ENCODE measurements at regions of chr10 and their contacts with region 1.

Region 1: DNA sequence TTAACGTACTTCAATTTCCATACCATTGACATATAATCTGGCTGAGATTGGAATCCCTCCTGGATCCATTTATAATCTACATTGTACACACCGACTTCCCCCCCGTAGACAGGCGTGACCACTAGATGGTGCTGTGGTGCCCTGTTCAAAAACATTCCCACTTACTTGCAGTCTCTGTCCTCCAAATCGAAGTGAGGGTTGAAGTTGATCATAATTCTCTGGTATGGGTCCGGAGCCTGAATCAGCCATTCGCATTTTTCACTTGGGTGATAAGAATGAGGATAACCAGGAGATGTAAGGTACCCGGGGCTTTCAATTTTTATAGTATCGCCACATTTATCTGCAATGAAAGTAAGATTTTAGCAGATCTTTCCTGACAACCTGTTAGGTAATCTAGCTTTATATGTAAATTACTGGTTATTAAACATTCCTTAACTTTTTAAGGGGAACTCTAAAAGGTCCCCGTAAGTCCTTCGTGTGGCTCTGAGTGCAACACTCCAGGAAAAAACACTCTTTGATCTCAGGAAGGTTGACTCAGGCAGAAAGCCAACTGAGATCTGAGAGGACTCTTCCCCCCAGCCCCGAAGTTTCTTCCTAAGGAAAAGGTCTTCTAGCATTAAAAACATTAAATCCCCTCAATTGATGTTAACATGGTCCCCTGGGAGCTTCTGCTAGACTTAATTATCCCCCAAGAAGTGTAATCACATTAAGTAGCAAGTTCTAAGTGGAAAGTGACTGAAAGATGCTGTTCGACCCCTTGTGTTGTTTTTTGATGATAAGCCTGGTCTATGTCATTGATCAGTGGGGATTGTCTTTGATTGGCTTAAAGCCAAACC is 3.7 kb downstream of the NRP1 start:
- DNase-seq: peak; percentile 87 to 89 (median 87)
- ATAC-seq: peak; percentile 9 to 35 (median 25)
- H3K4me3 ChIP-seq: peak overlapping the region; percentile 53 to 92 (median 88)
- H3K27ac ChIP-seq: peak overlapping the region in 11 of 12 donors; percentile 95 to 100 (median 98)
- H3K4me1 ChIP-seq: peaks cover 3 to 53% (median 40%) of the 10 kb centered on the region in 12 donors
- H3K27me3 ChIP-seq: no peaks in the 10 kb centered on the region
- CTCF ChIP-seq: peak; percentile 87 to 96 (median 91)
- POLR2A ChIP-seq: no peak

Region 2: GRCh38 chr10:32948451-32948850 is 382.3 kb before region 1 on chr10:
- intact Hi-C with region 1: no loop called
- DNase-seq: no peak
- ATAC-seq: no peak
- H3K4me3 ChIP-seq: no peak overlapping the region
- H3K27ac ChIP-seq: peak overlapping the region in 1 of 12 donors; percentile 27
- H3K4me1 ChIP-seq: peaks cover 4 to 92% (median 74%) of the 10 kb centered on the region in 12 donors
- H3K27me3 ChIP-seq: no peaks in the 10 kb centered on the region
- CTCF ChIP-seq: no peak
- POLR2A ChIP-seq: no peak

Region 3: DNA sequence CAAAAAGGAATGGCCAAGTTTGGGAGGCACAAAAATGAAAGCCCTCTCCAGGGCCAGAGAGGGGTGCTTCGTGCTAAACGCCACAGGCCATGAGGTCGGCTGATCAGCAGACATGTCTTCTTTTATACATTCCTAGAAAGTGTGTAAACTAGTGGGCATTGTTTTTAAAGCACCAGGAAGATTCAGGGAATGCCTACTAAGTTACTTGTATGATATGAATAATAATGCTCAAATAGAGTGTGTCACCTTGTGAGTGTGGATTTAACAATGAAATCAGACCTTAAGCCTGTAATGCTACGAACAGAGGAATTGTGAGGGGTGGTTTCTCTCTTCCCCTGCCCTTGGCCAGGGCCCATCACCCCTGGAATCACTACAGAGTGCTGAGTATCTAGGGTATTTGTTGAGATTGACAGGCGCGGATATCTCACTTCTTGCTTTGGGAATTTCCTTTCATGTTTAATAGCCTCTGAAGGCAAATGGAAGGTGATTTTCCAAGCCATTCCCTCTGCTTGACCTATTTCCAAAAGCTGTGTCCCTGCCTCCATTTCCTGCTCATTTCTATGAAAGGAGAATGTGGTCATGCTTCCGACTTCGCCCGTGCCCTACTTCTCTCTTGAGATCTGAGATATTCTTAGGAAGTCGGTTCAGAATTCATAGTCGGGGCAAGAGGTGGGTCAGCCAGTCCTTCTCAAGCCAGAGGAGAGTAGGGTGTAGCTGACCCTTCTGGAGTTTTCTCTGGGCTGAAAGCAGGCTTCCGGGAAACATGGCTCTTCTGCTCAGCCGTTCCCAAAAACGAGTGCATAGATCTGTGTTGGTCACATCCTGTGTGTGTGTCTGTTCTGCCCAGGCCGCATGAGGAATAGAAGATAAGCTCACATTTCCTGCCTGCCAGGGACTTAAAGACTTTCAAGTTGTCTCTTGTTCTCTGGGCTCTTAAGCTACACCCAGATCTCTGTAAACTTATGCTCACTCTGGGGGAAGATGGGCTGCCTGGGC is 204.9 kb before region 1 on chr10:
- intact Hi-C with region 1: loop called in 1 of 10 experiments (anchors 5 kb)
- DNase-seq: peak in 3 of 5 donors; percentile 26 to 54 (median 28)
- ATAC-seq: peak; percentile 24 to 56 (median 42)
- H3K4me3 ChIP-seq: no peak overlapping the region
- H3K27ac ChIP-seq: peak overlapping the region in 11 of 12 donors; percentile 21 to 85 (median 55)
- H3K4me1 ChIP-seq: peaks cover 0 to 52% (median 22%) of the 10 kb centered on the region in 12 donors
- H3K27me3 ChIP-seq: no peaks in the 10 kb centered on the region
- CTCF ChIP-seq: no peak
- POLR2A ChIP-seq: no peak

Region 4: GRCh38 chr10:33434933-33435332 is 104.2 kb after region 1 on chr10:
- intact Hi-C with region 1: no loop called
- DNase-seq: no peak
- ATAC-seq: no peak
- H3K4me3 ChIP-seq: no peak overlapping the region
- H3K27ac ChIP-seq: peak overlapping the region in 1 of 12 donors; percentile 23
- H3K4me1 ChIP-seq: peaks cover 0 to 3% (median 0%) of the 10 kb centered on the region in 12 donors
- H3K27me3 ChIP-seq: no peaks in the 10 kb centered on the region
- CTCF ChIP-seq: no peak
- POLR2A ChIP-seq: no peak

Region 5: GRCh38 chr10:33553748-33554571 is 223.2 kb after region 1 on chr10:
- intact Hi-C with region 1: loop called in 1 of 10 experiments (anchors 5 kb)
- DNase-seq: no peak
- ATAC-seq: no peak
- H3K4me3 ChIP-seq: no peak overlapping the region
- H3K27ac ChIP-seq: no peak overlapping the region
- H3K4me1 ChIP-seq: peaks cover 0 to 7% (median 2%) of the 10 kb centered on the region in 12 donors
- H3K27me3 ChIP-seq: no peaks in the 10 kb centered on the region
- CTCF ChIP-seq: no peak
- POLR2A ChIP-seq: no peak

Region 6: GRCh38 chr10:33631929-33632328 is 301.2 kb after region 1 on chr10:
- intact Hi-C with region 1: no loop called
- DNase-seq: no peak
- ATAC-seq: no peak
- H3K4me3 ChIP-seq: no peak overlapping the region
- H3K27ac ChIP-seq: no peak overlapping the region
- H3K4me1 ChIP-seq: peaks cover 0 to 8% (median 0%) of the 10 kb centered on the region in 12 donors
- H3K27me3 ChIP-seq: no peaks in the 10 kb centered on the region
- CTCF ChIP-seq: no peak
- POLR2A ChIP-seq: no peak

Region 7: DNA sequence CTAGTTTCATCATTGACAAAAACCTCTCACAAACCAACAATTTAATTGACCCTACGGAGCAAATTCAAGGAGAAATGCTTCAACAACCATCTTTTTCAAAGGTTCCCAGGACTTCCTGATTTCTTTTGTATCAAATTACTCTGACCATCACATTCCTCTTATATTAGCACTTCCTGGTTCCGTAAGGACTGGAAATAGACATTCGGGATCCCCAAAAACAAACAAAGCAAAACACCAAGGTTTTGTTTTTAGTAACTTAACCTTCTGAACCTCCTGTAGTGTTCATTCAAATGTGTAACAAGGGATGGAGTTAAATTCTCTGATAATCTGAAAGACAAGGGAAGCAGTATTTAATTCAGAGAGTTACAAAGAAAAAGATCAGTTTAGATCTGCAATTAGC is 391.3 kb after region 1 on chr10:
- intact Hi-C with region 1: loop called in 4 of 10 experiments (anchors 5 to 10 kb)
- DNase-seq: no peak
- ATAC-seq: no peak
- H3K4me3 ChIP-seq: no peak overlapping the region
- H3K27ac ChIP-seq: peak overlapping the region in 5 of 12 donors; percentile 12 to 42 (median 38)
- H3K4me1 ChIP-seq: peaks cover 11 to 45% (median 32%) of the 10 kb centered on the region in 12 donors
- H3K27me3 ChIP-seq: no peaks in the 10 kb centered on the region
- CTCF ChIP-seq: no peak
- POLR2A ChIP-seq: no peak

Region 8: GRCh38 chr10:33887188-33887587 is 556.4 kb after region 1 on chr10:
- intact Hi-C with region 1: loop called in 2 of 10 experiments (anchors 2 to 10 kb)
- DNase-seq: peak in 2 of 5 donors; percentile 35 to 38
- ATAC-seq: peak; percentile 51 to 77 (median 74)
- H3K4me3 ChIP-seq: no peak overlapping the region
- H3K27ac ChIP-seq: no peak overlapping the region
- H3K4me1 ChIP-seq: no peaks in the 10 kb centered on the region
- H3K27me3 ChIP-seq: no peaks in the 10 kb centered on the region
- CTCF ChIP-seq: no peak
- POLR2A ChIP-seq: no peak

Region 9: DNA sequence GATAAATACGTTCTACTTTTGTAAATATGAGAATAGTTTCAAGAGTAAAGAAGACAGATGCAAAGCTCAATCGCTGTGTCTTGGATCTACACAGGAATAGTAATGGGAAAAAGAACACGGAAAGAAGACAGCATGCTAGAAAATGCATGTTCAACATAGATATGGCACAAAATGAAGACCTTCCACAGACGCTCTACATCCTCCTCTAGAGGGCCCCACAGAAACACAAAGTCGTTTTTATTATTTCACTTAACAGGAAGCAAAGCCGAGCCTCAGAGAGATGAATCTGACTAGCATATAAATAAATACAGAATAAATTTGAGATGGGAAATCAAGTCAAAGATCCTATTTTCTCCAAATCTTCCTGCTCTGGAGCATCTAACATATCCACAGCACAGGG is 1191.8 kb after region 1 on chr10:
- intact Hi-C with region 1: loop called in 1 of 10 experiments (anchors 10 kb)
- DNase-seq: no peak
- ATAC-seq: no peak
- H3K4me3 ChIP-seq: peak overlapping the region in 5 of 12 donors; percentile 10 to 26 (median 22)
- H3K27ac ChIP-seq: no peak overlapping the region
- H3K4me1 ChIP-seq: peaks cover 0 to 15% (median 6%) of the 10 kb centered on the region in 12 donors
- H3K27me3 ChIP-seq: no peaks in the 10 kb centered on the region
- CTCF ChIP-seq: peak in 11 of 12 donors; percentile 16 to 57 (median 34)
- POLR2A ChIP-seq: no peak